Colonic mucosa (tissue), 4 donors: ENCODE measurements at regions of chr2 and their contacts with region 1.

Region 1: GRCh38 chr2:43898134-43898837 is 59.5 kb downstream of the ABCG8 start:
- DNase-seq: peak; percentile 32
- H3K4me3 ChIP-seq: no peak overlapping the region
- H3K27ac ChIP-seq: no peak overlapping the region
- H3K4me1 ChIP-seq: no peaks in the 10 kb centered on the region
- H3K27me3 ChIP-seq: no peaks in the 10 kb centered on the region
- CTCF ChIP-seq: peak; percentile 26

Region 2: GRCh38 chr2:43611987-43612894 is 286.0 kb before region 1 on chr2:
- intact Hi-C with region 1: loop called (anchors 10 kb)
- DNase-seq: peak; percentile 77
- H3K4me3 ChIP-seq: no peak overlapping the region
- H3K27ac ChIP-seq: no peak overlapping the region
- H3K4me1 ChIP-seq: no peaks in the 10 kb centered on the region
- H3K27me3 ChIP-seq: no peaks in the 10 kb centered on the region
- CTCF ChIP-seq: peak; percentile 75

Region 3: DNA sequence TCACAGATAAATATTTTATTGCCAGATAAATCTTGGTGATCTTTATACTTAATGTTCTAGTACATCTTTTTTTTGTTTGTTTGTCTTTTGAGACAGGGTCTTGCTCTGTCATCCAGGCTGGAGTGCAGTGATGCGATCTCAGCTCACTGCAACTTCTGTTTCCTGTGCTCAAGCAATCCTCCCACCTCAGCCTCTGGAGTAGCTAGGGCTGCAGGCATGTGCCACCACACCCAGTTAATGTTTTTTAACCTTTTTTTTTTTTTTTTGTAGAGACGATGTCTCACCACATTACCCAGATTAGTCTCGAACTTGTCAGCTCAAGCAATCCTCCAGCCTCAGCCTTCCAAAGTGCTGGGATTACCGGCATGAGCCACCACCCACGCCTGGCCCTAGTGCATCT is 212.9 kb before region 1 on chr2:
- intact Hi-C with region 1: no loop called
- DNase-seq: no peak
- H3K4me3 ChIP-seq: no peak overlapping the region
- H3K27ac ChIP-seq: no peak overlapping the region
- H3K4me1 ChIP-seq: no peaks in the 10 kb centered on the region
- H3K27me3 ChIP-seq: no peaks in the 10 kb centered on the region
- CTCF ChIP-seq: no peak